Activated CD4-positive, alpha-beta memory T cell treated with anti-CD3 and anti-CD28 coated beads, Interleukin-2, amount 10 ng/mL, durations not matched to agents 7 days and 5 days (primary cell): ENCODE measurements at regions of chr5 and their contacts with region 1.

Region 1: DNA sequence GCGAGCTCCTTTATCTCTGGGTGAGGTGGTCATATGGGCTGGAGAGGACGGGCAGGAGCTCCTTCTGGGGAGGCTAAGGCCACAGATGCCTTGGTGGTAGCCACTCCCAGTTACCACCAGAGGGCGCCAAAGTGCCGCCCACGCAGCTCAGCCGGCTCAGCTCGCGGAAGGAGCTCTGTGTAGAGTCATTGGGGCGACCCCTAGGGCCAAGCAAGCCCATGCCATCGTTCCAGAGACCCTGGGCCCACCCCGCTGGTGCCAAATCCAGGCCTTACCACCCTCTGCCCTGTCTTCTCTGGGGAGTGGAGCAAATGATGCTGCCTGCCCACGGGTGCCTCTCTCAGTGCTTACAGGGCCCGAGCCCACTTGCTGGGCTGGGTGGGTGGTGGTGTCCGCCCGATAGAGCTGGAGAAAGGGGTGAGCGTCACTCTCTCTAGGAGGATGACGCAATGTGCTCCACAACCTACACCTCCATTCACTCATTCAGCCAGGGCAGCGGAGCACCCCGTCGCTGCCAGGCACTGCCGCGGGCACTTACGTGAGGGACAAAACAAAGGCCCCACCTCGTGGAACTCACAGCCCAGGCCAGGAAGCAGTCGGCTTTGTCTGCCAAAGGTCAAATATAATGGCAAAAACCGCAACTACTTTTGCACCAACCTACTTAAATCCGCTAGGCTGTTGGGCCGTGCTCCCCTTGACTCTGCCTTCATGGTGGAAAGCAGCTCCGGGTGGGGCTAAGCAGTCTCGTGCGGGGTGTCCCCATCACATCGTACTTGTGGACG is 13.8 kb downstream of the TSPAN17 start:
- DNase-seq: peak; percentile 77
- H3K4me3 Mint-ChIP-seq: no peak overlapping the region
- H3K27ac Mint-ChIP-seq: no peak overlapping the region
- H3K4me1 Mint-ChIP-seq: peaks cover 29% of the 10 kb centered on the region
- H3K27me3 Mint-ChIP-seq: peaks cover 7% of the 10 kb centered on the region

Region 2: GRCh38 chr5:176606875-176607274 is 54.2 kb before region 1 on chr5:
- CTCF ChIA-PET with region 1: no interaction called
- POLR2A ChIA-PET with region 1: no interaction called
- DNase-seq: no peak
- H3K4me3 Mint-ChIP-seq: no peak overlapping the region
- H3K27ac Mint-ChIP-seq: no peak overlapping the region
- H3K4me1 Mint-ChIP-seq: peaks cover 13% of the 10 kb centered on the region
- H3K27me3 Mint-ChIP-seq: peaks cover 17% of the 10 kb centered on the region

Region 3: DNA sequence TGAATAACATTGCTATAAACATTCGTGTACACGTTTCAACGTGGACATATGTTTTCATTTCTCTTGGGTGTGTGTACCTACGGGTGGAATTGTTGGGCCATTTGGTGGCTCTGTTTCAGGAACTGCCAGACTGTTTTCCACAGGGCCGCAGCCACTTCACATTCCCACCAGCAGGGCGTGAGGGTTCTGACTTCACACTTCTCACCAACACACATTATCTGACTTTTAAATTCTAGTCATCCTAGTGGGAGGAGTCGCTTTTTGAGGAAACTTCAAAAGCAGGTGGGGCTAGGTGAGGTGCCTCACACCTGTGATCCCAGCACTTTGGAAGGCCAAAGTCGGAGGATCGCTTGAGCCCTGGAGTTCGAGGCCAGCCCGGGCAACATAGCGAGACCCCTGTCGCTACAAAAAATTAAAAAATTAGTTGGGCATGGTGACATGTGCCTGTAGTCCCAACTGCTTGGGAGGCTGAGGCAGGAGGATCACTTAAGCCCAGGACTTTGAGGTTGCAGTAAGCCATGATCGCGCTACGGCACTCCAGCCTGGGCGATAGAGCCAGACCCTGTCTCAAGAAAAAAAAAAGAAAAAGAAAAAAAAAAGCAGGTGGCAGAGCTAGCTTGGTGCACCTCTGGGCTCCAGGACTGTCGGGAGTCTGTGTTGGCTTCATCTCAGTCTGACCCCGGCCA is 14.8 kb after region 1 on chr5:
- CTCF ChIA-PET with region 1: interaction called, 23 read pairs
- POLR2A ChIA-PET with region 1: no interaction called
- DNase-seq: no peak
- H3K4me3 Mint-ChIP-seq: no peak overlapping the region
- H3K27ac Mint-ChIP-seq: no peak overlapping the region
- H3K4me1 Mint-ChIP-seq: no peaks in the 10 kb centered on the region
- H3K27me3 Mint-ChIP-seq: peaks cover 31% of the 10 kb centered on the region

Region 4: GRCh38 chr5:176818391-176819098 is 157.5 kb after region 1 on chr5:
- CTCF ChIA-PET with region 1: interaction called, 12 read pairs
- POLR2A ChIA-PET with region 1: no interaction called
- DNase-seq: peak; percentile 55
- H3K4me3 Mint-ChIP-seq: peak overlapping the region; percentile 12
- H3K27ac Mint-ChIP-seq: no peak overlapping the region
- H3K4me1 Mint-ChIP-seq: peaks cover 13% of the 10 kb centered on the region
- H3K27me3 Mint-ChIP-seq: peaks cover 56% of the 10 kb centered on the region

Region 5: GRCh38 chr5:176918613-176919012 is 257.6 kb after region 1 on chr5:
- CTCF ChIA-PET with region 1: no interaction called
- POLR2A ChIA-PET with region 1: no interaction called
- DNase-seq: no peak
- H3K4me3 Mint-ChIP-seq: no peak overlapping the region
- H3K27ac Mint-ChIP-seq: no peak overlapping the region
- H3K4me1 Mint-ChIP-seq: peaks cover 9% of the 10 kb centered on the region
- H3K27me3 Mint-ChIP-seq: no peaks in the 10 kb centered on the region

Region 6: DNA sequence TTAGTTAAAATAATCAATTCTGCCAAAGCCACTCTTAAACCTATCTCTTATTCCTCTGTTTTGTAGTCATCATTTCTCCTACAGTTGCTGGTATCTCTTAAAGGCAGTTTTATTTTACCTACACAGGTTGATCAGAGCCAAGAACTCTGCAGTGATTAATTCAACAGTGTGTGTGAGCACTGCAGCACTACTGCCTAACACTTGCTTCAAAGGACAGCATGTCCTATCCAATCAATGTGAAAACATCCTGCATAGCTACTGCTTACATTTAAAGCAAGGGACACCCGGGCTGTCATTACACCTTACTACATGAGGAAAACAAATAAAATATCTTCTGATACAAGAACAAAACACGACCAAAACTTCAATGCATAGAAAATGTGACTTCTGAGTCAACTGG is 283.2 kb after region 1 on chr5:
- CTCF ChIA-PET with region 1: interaction called, 12 read pairs
- POLR2A ChIA-PET with region 1: no interaction called
- DNase-seq: no peak
- H3K4me3 Mint-ChIP-seq: no peak overlapping the region
- H3K27ac Mint-ChIP-seq: no peak overlapping the region
- H3K4me1 Mint-ChIP-seq: peaks cover 2% of the 10 kb centered on the region
- H3K27me3 Mint-ChIP-seq: no peaks in the 10 kb centered on the region

Region 7: DNA sequence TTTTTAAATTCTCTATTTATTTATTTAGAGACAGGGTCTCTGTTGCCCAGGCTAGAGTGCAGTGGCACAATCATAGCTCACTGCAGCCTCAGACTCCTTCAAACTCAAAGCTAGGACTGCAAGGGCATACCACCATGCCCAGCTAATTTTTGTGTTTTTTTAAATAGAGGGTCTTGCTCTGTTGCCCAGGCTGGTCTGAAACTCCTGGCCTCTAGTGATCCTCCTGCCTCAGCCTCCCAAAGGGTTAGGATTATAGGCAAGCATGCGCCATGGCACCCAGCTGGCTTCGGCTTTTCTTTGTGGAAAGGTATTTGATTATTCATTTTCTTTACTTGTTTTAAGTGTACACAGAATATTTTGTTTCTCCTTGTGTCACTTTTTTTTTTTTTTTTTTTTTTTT is 366.6 kb after region 1 on chr5:
- CTCF ChIA-PET with region 1: interaction called, 13 read pairs
- POLR2A ChIA-PET with region 1: no interaction called
- DNase-seq: no peak
- H3K4me3 Mint-ChIP-seq: no peak overlapping the region
- H3K27ac Mint-ChIP-seq: no peak overlapping the region
- H3K4me1 Mint-ChIP-seq: peaks cover 25% of the 10 kb centered on the region
- H3K27me3 Mint-ChIP-seq: no peaks in the 10 kb centered on the region

Region 8: DNA sequence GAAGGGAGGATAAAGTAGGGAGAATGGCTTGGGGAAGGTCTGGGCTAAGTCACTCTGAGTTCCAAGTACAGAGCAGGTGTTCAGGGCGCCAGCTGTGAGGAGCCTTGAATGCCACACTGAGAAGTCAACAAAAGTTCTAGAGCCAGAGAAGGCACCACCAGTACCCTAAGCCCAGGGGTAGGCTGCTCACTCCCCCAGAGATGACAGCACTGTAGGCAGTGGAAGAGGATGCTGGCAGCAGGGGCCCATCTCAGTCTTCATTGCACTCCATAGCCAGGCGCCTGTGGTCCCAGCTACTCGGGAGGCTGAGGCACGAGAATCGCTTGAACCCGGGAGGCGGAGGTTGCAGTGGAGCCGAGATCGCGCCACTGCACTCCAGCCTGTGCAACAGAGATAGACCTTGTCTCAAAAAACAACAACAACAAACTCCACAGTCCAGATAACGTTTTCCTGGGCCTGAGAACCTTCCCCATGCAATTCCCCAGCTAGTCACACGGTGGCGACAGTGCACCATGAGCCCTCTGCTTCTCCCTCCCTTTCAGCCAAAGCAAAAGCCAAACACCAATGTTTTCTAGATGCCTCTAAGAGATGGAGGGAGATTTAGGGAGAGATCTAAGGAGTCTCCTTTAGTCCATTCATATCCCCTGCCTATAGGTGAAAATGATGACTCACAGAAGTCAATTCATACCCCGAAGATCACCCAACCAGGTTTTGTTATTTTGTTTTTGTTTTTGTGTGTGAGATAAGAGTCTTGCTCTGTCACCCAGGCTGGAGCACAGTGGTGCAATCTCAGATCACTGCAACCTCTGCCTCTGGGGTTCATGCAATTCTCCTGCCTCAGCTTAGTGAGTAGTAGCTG is 452.7 kb after region 1 on chr5:
- CTCF ChIA-PET with region 1: interaction called, 28 read pairs
- POLR2A ChIA-PET with region 1: no interaction called
- DNase-seq: peak; percentile 83
- H3K4me3 Mint-ChIP-seq: no peak overlapping the region
- H3K27ac Mint-ChIP-seq: no peak overlapping the region
- H3K4me1 Mint-ChIP-seq: peaks cover 25% of the 10 kb centered on the region
- H3K27me3 Mint-ChIP-seq: no peaks in the 10 kb centered on the region